Head of caudate nucleus (tissue), 42 donors: ENCODE measurements at regions of chr2 and their contacts with region 1.

Region 1: GRCh38 chr2:55268907-55269644 is at the start of gene MTIF2:
- DNase-seq: peak; percentile 85 to 97 (median 93)

Region 2: GRCh38 chr2:55232084-55232862 is 36.8 kb before region 1 on chr2 and contains the starts of genes CLHC1 and RPS27A:
- intact Hi-C with region 1: loop called (anchors 5 kb)
- DNase-seq: peak; percentile 81 to 97 (median 93)

Region 3: GRCh38 chr2:55247025-55247424 is 22.1 kb before region 1 on chr2:
- intact Hi-C with region 1: no loop called
- DNase-seq: no peak